Activated CD4-positive, alpha-beta T cell treated with anti-CD3 and anti-CD28 coated beads for 36 hours (primary cell): ENCODE measurements at regions of chr17 and their contacts with region 1.

Region 1: DNA sequence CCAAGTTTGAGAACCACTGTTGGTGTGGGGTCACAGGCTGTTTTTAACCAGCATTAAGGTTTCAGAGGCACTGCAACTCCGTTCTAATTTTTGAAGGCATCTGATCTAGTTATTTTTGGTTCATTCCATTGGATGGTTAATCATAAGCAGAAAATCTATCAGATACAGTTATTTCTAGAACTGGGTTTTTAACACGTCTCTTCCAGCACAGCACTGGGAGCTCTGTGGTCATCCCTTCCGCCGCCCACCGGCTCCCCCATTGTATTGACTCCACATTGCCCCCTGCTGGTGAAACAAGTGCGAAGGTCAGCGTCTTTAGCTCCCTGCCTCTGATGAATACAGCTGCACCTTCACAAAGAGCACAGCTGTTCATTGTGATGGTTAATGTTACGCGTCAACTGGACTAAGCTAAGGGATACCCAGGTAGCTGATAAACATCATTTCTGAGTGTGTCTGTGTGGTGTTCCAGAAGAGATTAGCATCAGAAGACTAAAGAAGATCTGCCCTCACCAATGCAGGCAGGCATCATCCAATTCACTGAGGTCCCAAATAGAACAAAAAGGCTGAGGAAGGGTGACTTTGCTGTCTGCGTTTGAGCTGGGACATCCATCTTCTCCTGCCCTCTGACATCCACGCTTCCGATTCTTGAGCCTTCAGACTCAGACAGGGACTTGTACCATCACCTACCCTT is 8.5 kb downstream of the CCL18 start:
- DNase-seq: peak; percentile 88
- ATAC-seq: peak; percentile 85
- H3K4me3 Mint-ChIP-seq: no peak overlapping the region
- H3K27ac Mint-ChIP-seq: peak overlapping the region; percentile 58
- H3K4me1 Mint-ChIP-seq: peaks cover 27% of the 10 kb centered on the region
- H3K27me3 Mint-ChIP-seq: peaks cover 15% of the 10 kb centered on the region

Region 2: DNA sequence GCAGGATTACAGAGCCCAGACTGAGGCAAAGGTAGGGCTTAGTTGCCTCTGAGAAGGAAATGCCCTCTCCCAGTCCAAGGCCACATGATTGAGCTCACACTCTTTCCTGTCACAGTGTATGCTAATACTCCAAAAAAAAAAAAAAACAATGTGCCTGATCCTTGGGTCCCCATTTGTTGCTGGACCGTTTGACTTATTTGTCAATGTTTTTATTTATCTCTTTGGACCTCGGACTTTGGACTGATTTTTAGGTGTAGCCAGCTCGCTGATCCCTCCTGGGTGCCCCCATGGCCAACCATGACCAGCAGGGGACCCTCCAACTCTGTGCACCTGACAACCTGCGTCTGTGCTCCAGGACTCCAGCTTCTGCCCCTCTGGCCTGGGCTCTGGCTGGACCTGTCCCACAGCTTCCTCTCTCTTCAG is 90.7 kb before region 1 on chr17:
- CTCF ChIA-PET with region 1: interaction called, 11 read pairs
- POLR2A ChIA-PET with region 1: no interaction called
- intact Hi-C with region 1: no loop called
- DNase-seq: peak; percentile 17
- ATAC-seq: no peak
- H3K4me3 Mint-ChIP-seq: no peak overlapping the region
- H3K27ac Mint-ChIP-seq: no peak overlapping the region
- H3K4me1 Mint-ChIP-seq: no peaks in the 10 kb centered on the region
- H3K27me3 Mint-ChIP-seq: peaks cover 8% of the 10 kb centered on the region

Region 3: DNA sequence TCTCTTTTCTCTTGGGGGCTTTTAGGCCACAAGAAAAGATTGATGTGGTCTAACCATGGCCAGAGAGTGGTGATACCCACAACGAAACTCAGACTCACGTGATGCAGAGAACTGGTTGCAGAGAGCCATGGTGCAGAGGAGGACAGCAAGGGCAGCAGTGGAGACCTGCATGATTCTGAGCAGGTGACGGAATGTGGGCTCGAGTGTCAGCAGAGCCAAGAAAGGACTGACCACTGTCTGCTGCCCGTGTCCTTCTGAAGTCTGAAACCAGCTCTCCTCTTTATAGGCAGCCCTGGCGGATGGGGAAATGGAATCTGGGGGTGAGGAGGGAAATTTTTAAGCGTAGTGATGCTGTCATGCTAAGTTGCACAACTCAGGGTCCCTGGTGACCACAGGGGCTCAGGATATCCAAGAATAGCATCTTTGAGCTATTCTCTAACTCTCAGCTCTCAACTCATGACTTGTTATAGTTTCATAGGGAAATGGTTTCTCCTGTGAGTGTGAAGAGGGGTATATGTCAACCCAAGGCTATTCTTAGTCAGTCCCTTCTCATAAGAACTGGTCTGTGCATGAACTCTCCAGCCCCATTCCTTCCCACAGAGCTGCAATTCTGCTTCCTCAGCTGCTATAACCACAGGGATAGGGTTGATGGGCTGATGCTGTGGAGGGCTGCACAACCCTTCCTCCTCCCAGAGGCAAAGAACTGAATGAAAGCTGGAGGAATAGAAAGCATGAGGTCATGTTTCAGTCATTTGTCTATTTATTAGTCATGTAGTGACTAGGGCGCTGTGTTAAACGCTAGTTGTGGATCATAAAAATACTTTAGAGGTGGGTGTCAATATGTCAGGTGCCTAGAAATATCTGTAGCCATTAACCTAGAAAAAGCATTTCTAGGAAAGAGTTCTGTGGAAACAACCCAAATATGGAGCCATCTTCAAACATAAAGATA is 17.6 kb after region 1 on chr17 and contains the start of gene CCL3:
- CTCF ChIA-PET with region 1: interaction called, 11 read pairs
- POLR2A ChIA-PET with region 1: interaction called, 8 read pairs
- intact Hi-C with region 1: loop called (anchors 1 kb)
- DNase-seq: peak; percentile 67
- ATAC-seq: peak; percentile 75
- H3K4me3 Mint-ChIP-seq: peak within 1 kb of the TSS; percentile 50
- H3K27ac Mint-ChIP-seq: peak within 1 kb of the TSS; percentile 62
- H3K4me1 Mint-ChIP-seq: peaks cover 45% of the 10 kb centered on the region
- H3K27me3 Mint-ChIP-seq: peaks cover 22% of the 10 kb centered on the region
- total RNA-seq, gene CCL3: 287 to 296 TPM

Region 4: DNA sequence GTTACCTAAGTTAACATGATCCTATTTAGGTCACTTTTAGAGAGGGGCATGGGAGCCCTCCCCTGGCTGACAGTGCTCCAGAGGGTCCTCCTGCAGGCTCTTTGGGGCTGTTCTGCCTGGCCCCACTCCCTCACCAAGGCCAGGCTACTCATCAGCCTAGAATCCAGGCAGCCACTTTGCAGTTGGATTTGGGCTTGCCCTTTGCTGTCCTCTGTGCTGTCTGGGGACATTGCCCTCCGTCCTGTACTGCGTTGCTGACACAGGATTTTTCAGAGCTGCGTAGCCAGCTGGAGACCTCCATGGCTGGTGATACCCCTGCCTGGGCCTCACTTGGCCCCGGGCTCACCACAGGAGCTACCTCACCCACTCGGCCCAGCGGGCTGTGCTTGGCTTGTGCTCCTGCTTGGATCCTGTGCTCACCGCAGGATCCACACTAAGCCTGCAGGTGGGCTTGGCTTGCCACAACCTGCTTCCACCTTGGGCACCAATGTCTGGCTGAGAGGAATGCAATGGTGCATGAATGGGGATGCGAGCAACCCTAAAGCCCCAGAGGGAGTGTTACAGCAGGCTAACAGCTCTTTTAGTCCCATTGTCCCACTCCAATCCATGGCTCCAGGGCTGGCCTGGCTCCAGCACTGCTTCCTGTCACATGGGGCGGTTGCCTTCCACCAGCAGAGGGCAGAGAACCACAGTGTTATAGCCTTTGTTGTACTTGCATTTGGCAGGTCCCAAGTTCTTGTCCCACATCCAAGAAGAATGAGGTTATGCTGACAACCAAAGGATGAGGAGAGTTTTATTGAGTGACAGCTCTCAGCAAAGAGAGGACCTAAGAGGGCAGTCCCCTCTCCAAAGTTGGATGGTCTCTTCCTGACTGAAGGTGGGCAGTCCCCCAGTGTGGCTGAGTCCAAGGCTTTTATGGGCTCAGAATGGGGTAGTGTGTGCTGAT is 52.6 kb after region 1 on chr17:
- CTCF ChIA-PET with region 1: interaction called, 13 read pairs
- POLR2A ChIA-PET with region 1: no interaction called
- intact Hi-C with region 1: no loop called
- DNase-seq: no peak
- ATAC-seq: no peak
- H3K4me3 Mint-ChIP-seq: no peak overlapping the region
- H3K27ac Mint-ChIP-seq: no peak overlapping the region
- H3K4me1 Mint-ChIP-seq: peaks cover 10% of the 10 kb centered on the region
- H3K27me3 Mint-ChIP-seq: peaks cover 24% of the 10 kb centered on the region

Region 5: GRCh38 chr17:36148559-36149295 is 76.2 kb after region 1 on chr17:
- CTCF ChIA-PET with region 1: interaction called, 49 read pairs
- POLR2A ChIA-PET with region 1: no interaction called
- intact Hi-C with region 1: loop called (anchors 1 to 5 kb)
- DNase-seq: peak; percentile 80
- ATAC-seq: peak; percentile 87
- H3K4me3 Mint-ChIP-seq: no peak overlapping the region
- H3K27ac Mint-ChIP-seq: no peak overlapping the region
- H3K4me1 Mint-ChIP-seq: peaks cover 3% of the 10 kb centered on the region
- H3K27me3 Mint-ChIP-seq: peaks cover 15% of the 10 kb centered on the region